Dorsolateral prefrontal cortex (tissue), 120 donors: ENCODE measurements at regions of chr1 and their contacts with region 1.

Region 1: GRCh38 chr1:212782422-212783154 is 9.0 kb downstream of the NSL1 start:
- DNase-seq: no peak
- H3K4me3 ChIP-seq: no peak overlapping the region
- H3K27ac ChIP-seq: peak overlapping the region in 14 of 59 donors; percentile 2 to 53 (median 18)
- H3K27me3 ChIP-seq: no peaks in the 10 kb centered on the region
- CTCF ChIP-seq: peak; percentile 52 to 90 (median 74)

Region 2: GRCh38 chr1:212482384-212483281 is 300.0 kb before region 1 on chr1:
- intact Hi-C with region 1: loop called in 1 of 2 experiments (anchors 5 kb)
- DNase-seq: no peak
- H3K4me3 ChIP-seq: no peak overlapping the region
- H3K27ac ChIP-seq: no peak overlapping the region
- H3K27me3 ChIP-seq: no peaks in the 10 kb centered on the region
- CTCF ChIP-seq: no peak

Region 3: GRCh38 chr1:212665241-212666115 is 117.1 kb before region 1 on chr1:
- intact Hi-C with region 1: loop called (anchors 2 to 10 kb)
- DNase-seq: peak; percentile 26 to 85 (median 62)
- H3K4me3 ChIP-seq: peak overlapping the region; percentile 35 to 82 (median 64)
- H3K27ac ChIP-seq: peak overlapping the region in 39 of 59 donors; percentile 11 to 89 (median 66)
- H3K27me3 ChIP-seq: no peaks in the 10 kb centered on the region
- CTCF ChIP-seq: peak; percentile 56 to 99 (median 93)